ENCODE measurements at regions of chr5 and their contacts with region 1.

Region 1: GRCh38 chr5:95822542-95823181 is at the start of gene GLRX:
- DNase-seq: peak in 2 of 3 donors; percentile 75 to 80
- H3K4me3 ChIP-seq: peak within 1 kb of the TSS; percentile 87 to 100 (median 98)
- H3K4me3 Mint-ChIP-seq: peak within 1 kb of the TSS; percentile 97
- H3K27ac ChIP-seq: peak within 1 kb of the TSS; percentile 92 to 95
- H3K27ac Mint-ChIP-seq: peak within 1 kb of the TSS; percentile 97 to 99 (median 99)
- H3K4me1 ChIP-seq: peaks cover 75 to 92% of the 10 kb centered on the region in 2 donors
- H3K4me1 Mint-ChIP-seq: peaks cover 82% of the 10 kb centered on the region
- H3K27me3 ChIP-seq: no peaks in the 10 kb centered on the region
- H3K27me3 Mint-ChIP-seq: peaks cover 0 to 2% (median 0%) of the 10 kb centered on the region in 3 donors
- CTCF ChIP-seq: no peak
- polyA plus RNA-seq, gene GLRX: 386 to 603 (median 555) TPM

Region 2: GRCh38 chr5:95730730-95731570 is 91.7 kb before region 1 on chr5 and contains the start of gene RHOBTB3:
- intact Hi-C with region 1: loop called in 1 of 2 experiments (anchors 10 kb)
- DNase-seq: peak in 2 of 3 donors; percentile 31 to 41
- H3K4me3 ChIP-seq: peak within 1 kb of the TSS; percentile 68 to 88 (median 84)
- H3K4me3 Mint-ChIP-seq: peak within 1 kb of the TSS; percentile 94 to 96
- H3K27ac ChIP-seq: no peak within 1 kb of the TSS
- H3K27ac Mint-ChIP-seq: peak within 1 kb of the TSS in 6 of 7 donors; percentile 40 to 74 (median 47)
- H3K4me1 ChIP-seq: peaks cover 11 to 20% of the 10 kb centered on the region in 2 donors
- H3K4me1 Mint-ChIP-seq: peaks cover 34% of the 10 kb centered on the region
- H3K27me3 ChIP-seq: peaks cover 0 to 3% of the 10 kb centered on the region in 2 donors
- H3K27me3 Mint-ChIP-seq: peaks cover 10 to 14% (median 10%) of the 10 kb centered on the region in 3 donors
- CTCF ChIP-seq: no peak
- polyA plus RNA-seq, gene RHOBTB3: 0.41 to 1.5 (median 0.63) TPM

Measured in CD14-positive monocyte (primary cell).